ENCODE measurements at regions of chr15 and their contacts with region 1.

Region 1: DNA sequence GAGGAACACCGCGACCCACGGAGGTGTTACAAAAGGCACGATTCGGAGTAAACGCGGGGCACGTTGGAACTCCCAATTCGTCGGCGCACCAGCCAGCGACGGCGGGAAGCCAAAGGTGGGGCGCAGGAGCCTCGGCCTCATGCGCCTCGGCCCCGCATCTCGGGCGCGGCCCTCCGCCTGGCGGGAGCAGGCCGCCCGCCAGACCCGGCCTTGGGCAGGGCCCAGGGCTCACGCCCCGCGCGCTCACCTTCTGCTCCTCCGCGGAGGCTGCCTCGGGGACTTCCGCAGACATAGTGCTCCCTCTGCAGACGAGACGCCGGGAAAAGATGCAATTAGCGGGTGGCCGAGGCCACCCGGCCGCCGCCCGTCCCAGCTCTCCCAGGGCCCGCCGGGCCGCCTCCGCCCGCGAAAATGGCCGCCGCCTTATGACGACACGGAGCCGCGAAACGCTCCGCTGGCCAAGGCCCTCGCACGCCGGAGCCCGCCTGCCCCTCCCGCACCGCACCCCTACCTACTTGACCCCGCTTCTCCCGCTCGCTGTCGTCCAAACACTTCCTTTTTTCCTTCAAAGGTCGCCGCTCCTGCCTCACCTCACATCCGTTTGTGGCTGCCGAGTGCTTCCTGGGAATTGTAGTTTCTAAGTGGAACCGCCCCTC is at the start of gene ARPP19:
- DNase-seq: peak; percentile 94 to 95
- H3K4me3 ChIP-seq: peak within 1 kb of the TSS; percentile 57 to 72 (median 62)
- H3K27ac ChIP-seq: peak within 1 kb of the TSS; percentile 95 to 100 (median 96)
- H3K4me1 ChIP-seq: peaks cover 29 to 39% of the 10 kb centered on the region in 2 donors
- H3K27me3 ChIP-seq: no peaks in the 10 kb centered on the region
- CTCF ChIP-seq: peak in 2 of 6 experiments; percentile 12 to 35
- POLR2A ChIP-seq: peak; percentile 33 to 86
- total RNA-seq, gene ARPP19: 148 to 221 (median 202) TPM

Region 2: DNA sequence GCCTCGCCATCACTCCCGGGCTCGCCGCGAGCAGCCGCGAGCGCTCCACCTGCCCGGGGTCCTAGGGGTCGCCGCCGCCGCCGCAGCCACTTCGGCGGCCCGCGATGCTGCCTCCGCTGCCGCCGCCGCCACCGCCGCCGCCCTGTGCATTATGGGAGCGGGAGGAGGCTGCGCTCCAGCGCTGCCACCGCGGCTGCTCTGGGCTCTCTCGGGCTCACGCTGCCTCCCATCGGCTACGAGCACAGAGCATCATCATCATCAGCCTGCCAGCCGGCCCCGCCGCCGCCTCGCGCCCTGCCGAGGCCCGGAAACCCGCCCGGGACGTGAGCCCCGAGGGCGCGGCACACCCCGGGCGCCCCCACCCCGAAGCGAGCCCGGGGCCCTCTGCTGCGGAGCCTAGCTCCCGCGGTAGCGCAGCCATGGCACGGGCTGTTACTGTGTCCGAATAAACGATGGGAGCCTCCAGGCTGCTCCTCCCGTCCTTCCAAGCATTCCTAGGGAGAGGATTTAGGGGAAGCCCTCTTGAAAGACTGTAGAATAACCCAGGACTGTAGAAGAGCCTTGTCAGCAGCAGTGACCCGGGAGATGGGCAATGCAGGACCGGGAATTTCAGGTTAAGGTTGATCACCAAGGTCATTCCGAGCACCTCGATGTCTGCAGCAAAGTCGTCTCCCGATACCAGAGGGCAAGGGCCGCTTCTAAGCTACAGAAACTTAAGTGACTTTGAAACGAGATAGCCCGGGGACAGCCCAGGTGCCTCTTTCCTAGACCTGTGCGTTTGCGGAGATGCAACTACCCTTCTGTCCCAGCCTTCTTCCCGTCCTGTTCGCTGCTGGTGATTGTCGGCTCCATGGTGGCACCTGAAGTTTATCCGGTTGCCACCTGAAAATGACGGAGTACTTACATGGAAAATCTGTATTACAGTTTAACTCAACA is 39.5 kb before region 1 on chr15:
- intact Hi-C with region 1: loop called (anchors 5 kb)
- DNase-seq: peak; percentile 67 to 68
- H3K4me3 ChIP-seq: peak overlapping the region; percentile 27 to 83 (median 40)
- H3K27ac ChIP-seq: peak overlapping the region in 1 of 3 donors; percentile 73
- H3K4me1 ChIP-seq: peaks cover 8 to 10% of the 10 kb centered on the region in 2 donors
- H3K27me3 ChIP-seq: no peaks in the 10 kb centered on the region
- CTCF ChIP-seq: no peak
- POLR2A ChIP-seq: no peak

Region 3: GRCh38 chr15:52679232-52680040 is 110.7 kb after region 1 on chr15 and contains the start of gene ATOSA:
- intact Hi-C with region 1: loop called (anchors 10 kb)
- DNase-seq: peak; percentile 94 to 95
- H3K4me3 ChIP-seq: peak within 1 kb of the TSS; percentile 38 to 88 (median 86)
- H3K27ac ChIP-seq: peak within 1 kb of the TSS; percentile 98 to 100 (median 99)
- H3K4me1 ChIP-seq: peaks cover 37% of the 10 kb centered on the region in 2 donors
- H3K27me3 ChIP-seq: no peaks in the 10 kb centered on the region
- CTCF ChIP-seq: peak in 1 of 6 experiments; percentile 6
- POLR2A ChIP-seq: peak; percentile 58 to 98
- total RNA-seq, gene ATOSA: 88.7 to 164 (median 117) TPM

Measured in thyroid gland (tissue), 4 donors.